Activated CD4-positive, alpha-beta T cell treated with anti-CD3 and anti-CD28 coated beads, Interleukin-2, amount 10 ng/mL, durations not matched to agents 24 days and 14 days (primary cell): ENCODE measurements at regions of chr10 and their contacts with region 1.

Region 1: DNA sequence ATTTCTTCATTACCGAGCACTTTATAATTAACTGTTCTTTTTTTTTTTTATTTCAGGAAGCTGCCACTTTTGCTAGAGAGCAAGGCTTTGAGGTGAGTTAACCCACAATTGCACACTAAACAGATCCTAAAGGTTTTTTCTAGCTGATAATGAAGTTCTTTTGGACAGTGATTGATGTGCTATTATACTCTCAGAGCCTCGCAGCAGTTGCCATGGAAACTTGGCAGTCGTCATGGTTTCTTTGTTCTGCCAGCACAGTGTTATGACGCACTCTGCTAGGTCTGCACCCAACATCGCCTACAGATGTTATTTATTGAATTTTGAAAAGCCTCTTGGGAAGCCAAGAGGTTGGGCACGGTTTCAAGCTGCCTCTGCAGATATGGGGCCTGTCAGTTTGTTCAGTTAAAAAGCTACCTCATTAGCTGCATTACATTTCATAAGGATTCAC is 237.2 kb upstream of the KAT6B start:
- DNase-seq: peak; percentile 94
- H3K4me3 Mint-ChIP-seq: no peak overlapping the region
- H3K27ac Mint-ChIP-seq: peak overlapping the region; percentile 80
- H3K4me1 Mint-ChIP-seq: peaks cover 49% of the 10 kb centered on the region
- H3K27me3 Mint-ChIP-seq: no peaks in the 10 kb centered on the region

Region 2: GRCh38 chr10:73495884-73496674 is 1093.2 kb before region 1 on chr10 and contains the start of gene PPP3CB:
- intact Hi-C with region 1: no loop called
- DNase-seq: peak; percentile 93
- H3K4me3 Mint-ChIP-seq: peak within 1 kb of the TSS; percentile 99
- H3K27ac Mint-ChIP-seq: peak within 1 kb of the TSS; percentile 99
- H3K4me1 Mint-ChIP-seq: peaks cover 38% of the 10 kb centered on the region
- H3K27me3 Mint-ChIP-seq: no peaks in the 10 kb centered on the region
- total RNA-seq, gene PPP3CB: 42.5 and 43.6 TPM in 2 replicates

Region 3: DNA sequence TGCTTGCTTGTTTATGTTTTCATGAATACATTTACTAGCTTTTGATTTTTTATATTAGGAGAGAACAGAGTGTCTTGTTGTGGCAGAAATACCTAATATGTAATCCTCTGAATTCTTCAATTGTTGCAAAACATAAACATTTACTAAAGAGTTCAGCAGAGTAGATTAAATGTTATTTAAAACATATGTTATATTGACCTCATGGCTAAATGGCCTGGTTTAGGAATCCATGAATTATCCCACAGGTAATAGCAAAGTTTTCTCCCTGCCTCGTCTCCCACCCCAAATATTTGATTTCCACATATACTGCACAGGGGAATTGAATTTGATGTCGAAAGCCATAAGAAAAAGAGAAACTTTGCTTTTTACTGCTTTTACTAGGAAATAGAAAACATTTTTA is 326.4 kb before region 1 on chr10:
- intact Hi-C with region 1: loop called (anchors 10 kb)
- DNase-seq: no peak
- H3K4me3 Mint-ChIP-seq: no peak overlapping the region
- H3K27ac Mint-ChIP-seq: peak overlapping the region; percentile 29
- H3K4me1 Mint-ChIP-seq: peaks cover 15% of the 10 kb centered on the region
- H3K27me3 Mint-ChIP-seq: no peaks in the 10 kb centered on the region

Region 4: GRCh38 chr10:74502963-74503608 is 86.2 kb before region 1 on chr10:
- intact Hi-C with region 1: loop called (anchors 1 kb)
- DNase-seq: no peak
- H3K4me3 Mint-ChIP-seq: peak overlapping the region; percentile 19
- H3K27ac Mint-ChIP-seq: peak overlapping the region; percentile 83
- H3K4me1 Mint-ChIP-seq: peaks cover 31% of the 10 kb centered on the region
- H3K27me3 Mint-ChIP-seq: no peaks in the 10 kb centered on the region

Region 5: GRCh38 chr10:74628136-74628535 is 38.9 kb after region 1 on chr10:
- intact Hi-C with region 1: no loop called
- DNase-seq: no peak
- H3K4me3 Mint-ChIP-seq: no peak overlapping the region
- H3K27ac Mint-ChIP-seq: no peak overlapping the region
- H3K4me1 Mint-ChIP-seq: no peaks in the 10 kb centered on the region
- H3K27me3 Mint-ChIP-seq: no peaks in the 10 kb centered on the region

Region 6: GRCh38 chr10:74826142-74827044 is 237.1 kb after region 1 on chr10 and contains the start of gene KAT6B:
- intact Hi-C with region 1: loop called (anchors 1 kb)
- DNase-seq: peak; percentile 100
- H3K4me3 Mint-ChIP-seq: peak within 1 kb of the TSS; percentile 87
- H3K27ac Mint-ChIP-seq: peak within 1 kb of the TSS; percentile 94
- H3K4me1 Mint-ChIP-seq: peaks cover 46% of the 10 kb centered on the region
- H3K27me3 Mint-ChIP-seq: no peaks in the 10 kb centered on the region
- total RNA-seq, gene KAT6B: 21.2 and 21.7 TPM in 2 replicates

Region 7: GRCh38 chr10:74977913-74978847 is 388.9 kb after region 1 on chr10:
- intact Hi-C with region 1: loop called (anchors 2 kb)
- DNase-seq: peak; percentile 91
- H3K4me3 Mint-ChIP-seq: peak overlapping the region; percentile 71
- H3K27ac Mint-ChIP-seq: peak overlapping the region; percentile 91
- H3K4me1 Mint-ChIP-seq: peaks cover 47% of the 10 kb centered on the region
- H3K27me3 Mint-ChIP-seq: no peaks in the 10 kb centered on the region

Region 8: GRCh38 chr10:75042292-75042974 is 453.2 kb after region 1 on chr10:
- intact Hi-C with region 1: loop called (anchors 5 kb)
- DNase-seq: peak; percentile 66
- H3K4me3 Mint-ChIP-seq: peak overlapping the region; percentile 32
- H3K27ac Mint-ChIP-seq: peak overlapping the region; percentile 86
- H3K4me1 Mint-ChIP-seq: peaks cover 33% of the 10 kb centered on the region
- H3K27me3 Mint-ChIP-seq: no peaks in the 10 kb centered on the region

Region 9: GRCh38 chr10:75210282-75211006 is 621.2 kb after region 1 on chr10 and contains the start of gene VDAC2:
- intact Hi-C with region 1: loop called (anchors 2 kb)
- DNase-seq: peak; percentile 99
- H3K4me3 Mint-ChIP-seq: peak within 1 kb of the TSS; percentile 96
- H3K27ac Mint-ChIP-seq: peak within 1 kb of the TSS; percentile 100
- H3K4me1 Mint-ChIP-seq: peaks cover 34% of the 10 kb centered on the region
- H3K27me3 Mint-ChIP-seq: no peaks in the 10 kb centered on the region
- total RNA-seq, gene VDAC2: 245 and 249 TPM in 2 replicates